Activated T-helper 1 cell treated with anti-CD3 and anti-CD28 coated beads, Interleukin-12 subunit alpha, Interleukin-12 subunit beta, Interleukin-2, Interleukin-4 antibody, amounts not matched to agents 30 ng/mL and 10 ng/mL and 1 ng/mL, durations not matched to agents 14 hours and 24 hours and 36 hours (primary cell): ENCODE measurements at regions of chr6 and their contacts with region 1.

Region 1: DNA sequence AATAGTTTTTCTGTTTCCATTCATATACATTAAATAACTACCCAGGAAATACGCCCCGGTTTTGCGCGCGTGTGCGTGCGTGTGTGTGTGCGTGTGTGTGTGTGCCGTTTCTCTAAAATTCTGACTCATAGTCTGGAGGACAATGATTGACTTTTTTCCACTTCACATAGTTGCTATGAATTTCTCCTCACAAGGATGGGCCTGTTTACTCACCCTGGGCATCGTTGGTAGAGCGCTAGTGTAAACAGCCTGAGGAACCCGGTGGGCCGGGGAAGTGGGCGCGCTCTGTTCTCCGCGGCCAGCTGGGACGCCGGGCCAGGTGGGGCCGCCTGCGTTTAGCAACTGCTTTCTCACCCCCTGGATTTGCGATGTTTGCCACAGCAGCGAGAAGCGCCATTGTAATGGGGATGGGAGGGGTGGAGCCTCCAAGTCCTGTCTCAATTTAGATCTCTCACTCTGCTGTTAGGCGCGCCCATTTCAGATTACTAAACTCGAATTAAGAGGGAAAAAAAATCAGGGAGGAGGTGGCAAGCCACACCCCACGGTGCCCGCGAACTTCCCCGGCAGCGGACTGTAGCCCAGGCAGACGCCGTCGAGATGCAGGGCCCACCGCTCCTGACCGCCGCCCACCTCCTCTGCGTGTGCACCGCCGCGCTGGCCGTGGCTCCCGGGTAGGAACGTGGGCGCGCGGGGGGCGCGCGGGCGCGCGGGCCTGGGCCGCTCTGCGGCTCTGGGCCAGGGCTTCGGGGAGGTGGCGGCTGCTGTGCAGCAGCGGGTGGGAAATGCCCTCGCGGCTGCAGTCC is at the start of gene CD109:
- DNase-seq: peak; percentile 61
- H3K4me3 Mint-ChIP-seq: peak within 1 kb of the TSS; percentile 88
- H3K27ac Mint-ChIP-seq: peak within 1 kb of the TSS; percentile 95
- H3K4me1 Mint-ChIP-seq: peaks cover 62% of the 10 kb centered on the region
- H3K27me3 Mint-ChIP-seq: peaks cover 4% of the 10 kb centered on the region
- total RNA-seq, gene CD109: 27.1 and 29.3 TPM in 2 replicates

Region 2: GRCh38 chr6:73580247-73581149 is 115.3 kb before region 1 on chr6:
- intact Hi-C with region 1: loop called (anchors 1 kb)
- DNase-seq: peak; percentile 47
- H3K4me3 Mint-ChIP-seq: peak overlapping the region; percentile 69
- H3K27ac Mint-ChIP-seq: peak overlapping the region; percentile 95
- H3K4me1 Mint-ChIP-seq: peaks cover 27% of the 10 kb centered on the region
- H3K27me3 Mint-ChIP-seq: no peaks in the 10 kb centered on the region

Region 3: DNA sequence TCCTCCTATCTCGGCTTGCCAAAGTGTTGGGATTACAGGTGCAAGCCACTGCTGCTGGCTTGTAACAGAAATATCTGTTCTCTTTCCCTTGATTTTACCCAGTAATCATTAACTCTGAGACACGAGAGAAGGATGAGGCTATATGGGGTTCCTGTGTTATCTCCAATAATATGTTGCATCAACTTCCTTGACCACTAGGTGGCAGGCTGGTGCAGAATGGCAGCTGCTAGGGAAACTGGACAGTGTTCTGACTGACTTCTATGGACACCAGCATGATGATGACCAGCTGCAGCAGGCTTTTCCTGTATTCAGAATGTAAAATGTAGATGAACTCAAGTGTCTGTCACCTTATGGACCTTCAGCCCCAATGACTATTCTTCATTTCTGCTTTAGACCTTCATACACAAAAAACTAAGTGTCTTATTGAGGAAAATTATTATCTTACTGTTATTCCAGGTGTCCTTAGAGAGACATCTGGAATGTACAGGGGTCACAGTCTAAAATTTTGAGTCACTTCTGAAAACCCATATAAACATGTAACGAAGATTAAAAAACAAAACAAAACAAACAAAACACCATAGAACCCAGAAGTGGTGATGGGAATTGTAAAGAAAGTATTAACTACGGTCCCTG is 20.2 kb before region 1 on chr6:
- intact Hi-C with region 1: loop called (anchors 1 kb)
- DNase-seq: peak; percentile 57
- H3K4me3 Mint-ChIP-seq: no peak overlapping the region
- H3K27ac Mint-ChIP-seq: no peak overlapping the region
- H3K4me1 Mint-ChIP-seq: peaks cover 6% of the 10 kb centered on the region
- H3K27me3 Mint-ChIP-seq: peaks cover 16% of the 10 kb centered on the region

Region 4: GRCh38 chr6:73722318-73723060 is 26.7 kb after region 1 on chr6:
- intact Hi-C with region 1: loop called (anchors 1 kb)
- DNase-seq: peak; percentile 21
- H3K4me3 Mint-ChIP-seq: peak overlapping the region; percentile 12
- H3K27ac Mint-ChIP-seq: peak overlapping the region; percentile 84
- H3K4me1 Mint-ChIP-seq: peaks cover 43% of the 10 kb centered on the region
- H3K27me3 Mint-ChIP-seq: no peaks in the 10 kb centered on the region

Region 5: GRCh38 chr6:73732845-73733675 is 37.2 kb after region 1 on chr6:
- intact Hi-C with region 1: loop called (anchors 1 kb)
- DNase-seq: peak; percentile 61
- H3K4me3 Mint-ChIP-seq: no peak overlapping the region
- H3K27ac Mint-ChIP-seq: peak overlapping the region; percentile 34
- H3K4me1 Mint-ChIP-seq: peaks cover 46% of the 10 kb centered on the region
- H3K27me3 Mint-ChIP-seq: no peaks in the 10 kb centered on the region

Region 6: DNA sequence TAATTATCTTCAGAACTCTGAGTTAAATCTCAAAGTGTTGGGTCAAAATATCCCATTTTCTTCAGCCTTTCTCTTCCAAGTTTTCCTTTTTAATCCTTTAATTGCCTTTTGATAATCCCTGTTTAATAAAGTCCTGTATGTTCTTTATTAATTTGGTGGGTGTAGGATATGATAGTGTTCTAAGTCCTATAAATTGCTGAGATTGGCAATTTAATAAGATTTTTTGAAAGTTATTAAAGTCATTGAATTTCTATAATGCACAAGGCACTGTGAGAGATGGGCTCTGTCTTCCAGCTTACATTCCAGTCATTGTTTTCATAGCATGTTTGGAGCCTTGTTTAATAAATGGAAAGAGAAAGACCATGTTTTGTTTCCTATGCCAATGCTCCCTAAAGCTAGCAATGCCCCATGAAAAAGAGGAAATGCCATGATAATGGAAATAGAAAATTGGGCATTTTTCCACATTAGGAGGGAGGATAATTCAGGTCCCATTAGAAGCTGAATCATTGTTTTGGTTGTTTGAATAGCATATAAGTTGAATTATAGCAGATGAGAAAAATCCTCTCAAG is 405.0 kb after region 1 on chr6:
- intact Hi-C with region 1: no loop called
- DNase-seq: no peak
- H3K4me3 Mint-ChIP-seq: no peak overlapping the region
- H3K27ac Mint-ChIP-seq: no peak overlapping the region
- H3K4me1 Mint-ChIP-seq: no peaks in the 10 kb centered on the region
- H3K27me3 Mint-ChIP-seq: peaks cover 3% of the 10 kb centered on the region